ENCODE measurements at regions of chr17 and their contacts with region 1.

Region 1: DNA sequence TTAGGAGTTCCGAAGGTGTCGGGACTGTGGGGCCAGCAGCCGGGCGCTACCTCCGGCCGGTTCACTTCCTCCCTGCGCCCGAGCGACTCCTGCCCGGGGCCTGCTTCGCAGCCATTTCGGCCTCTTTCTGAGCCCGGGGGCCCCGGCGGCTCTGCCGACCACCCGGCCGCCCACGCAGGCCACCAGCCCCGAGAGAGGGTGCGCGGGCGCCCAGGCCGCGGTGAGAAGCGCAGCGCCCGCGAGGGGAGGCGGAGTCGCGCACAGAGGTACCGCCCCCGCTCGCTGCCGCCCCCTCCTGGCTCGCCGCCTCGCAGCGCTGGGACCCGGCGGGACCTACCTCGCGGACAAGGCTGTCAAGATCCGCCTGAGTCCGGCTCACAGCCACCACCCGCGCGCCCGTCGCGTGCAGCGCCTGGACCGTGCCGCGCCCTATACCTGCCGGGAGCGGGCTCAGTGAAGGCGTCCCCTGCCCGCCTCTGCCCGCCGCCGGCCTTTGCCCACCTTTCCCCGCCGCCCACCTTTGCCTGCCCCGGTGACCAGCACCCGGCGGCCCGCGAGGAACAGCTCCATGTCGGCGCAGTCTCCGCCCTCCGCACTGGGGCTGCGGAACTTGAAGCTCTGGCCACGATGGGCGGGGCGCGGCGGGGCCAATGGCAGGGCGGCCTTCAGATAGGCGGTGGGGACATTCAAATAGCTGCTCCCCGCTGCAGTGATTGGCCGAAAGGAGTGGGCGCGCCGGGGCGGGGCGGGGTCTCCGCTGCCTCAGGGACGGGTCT is at the start of gene DCXR:
- DNase-seq: peak; percentile 98
- ATAC-seq: peak; percentile 96
- H3K4me3 Mint-ChIP-seq: peak within 1 kb of the TSS; percentile 78
- H3K27ac Mint-ChIP-seq: peak within 1 kb of the TSS; percentile 94
- H3K4me1 Mint-ChIP-seq: peaks cover 28% of the 10 kb centered on the region
- H3K27me3 Mint-ChIP-seq: no peaks in the 10 kb centered on the region
- total RNA-seq, gene DCXR: 141 TPM

Region 2: GRCh38 chr17:81941790-81942553 is 95.3 kb before region 1 on chr17:
- CTCF ChIA-PET with region 1: no interaction called
- POLR2A ChIA-PET with region 1: no interaction called
- DNase-seq: no peak
- ATAC-seq: no peak
- H3K4me3 Mint-ChIP-seq: no peak overlapping the region
- H3K27ac Mint-ChIP-seq: no peak overlapping the region
- H3K4me1 Mint-ChIP-seq: peaks cover 12% of the 10 kb centered on the region
- H3K27me3 Mint-ChIP-seq: no peaks in the 10 kb centered on the region

Region 3: DNA sequence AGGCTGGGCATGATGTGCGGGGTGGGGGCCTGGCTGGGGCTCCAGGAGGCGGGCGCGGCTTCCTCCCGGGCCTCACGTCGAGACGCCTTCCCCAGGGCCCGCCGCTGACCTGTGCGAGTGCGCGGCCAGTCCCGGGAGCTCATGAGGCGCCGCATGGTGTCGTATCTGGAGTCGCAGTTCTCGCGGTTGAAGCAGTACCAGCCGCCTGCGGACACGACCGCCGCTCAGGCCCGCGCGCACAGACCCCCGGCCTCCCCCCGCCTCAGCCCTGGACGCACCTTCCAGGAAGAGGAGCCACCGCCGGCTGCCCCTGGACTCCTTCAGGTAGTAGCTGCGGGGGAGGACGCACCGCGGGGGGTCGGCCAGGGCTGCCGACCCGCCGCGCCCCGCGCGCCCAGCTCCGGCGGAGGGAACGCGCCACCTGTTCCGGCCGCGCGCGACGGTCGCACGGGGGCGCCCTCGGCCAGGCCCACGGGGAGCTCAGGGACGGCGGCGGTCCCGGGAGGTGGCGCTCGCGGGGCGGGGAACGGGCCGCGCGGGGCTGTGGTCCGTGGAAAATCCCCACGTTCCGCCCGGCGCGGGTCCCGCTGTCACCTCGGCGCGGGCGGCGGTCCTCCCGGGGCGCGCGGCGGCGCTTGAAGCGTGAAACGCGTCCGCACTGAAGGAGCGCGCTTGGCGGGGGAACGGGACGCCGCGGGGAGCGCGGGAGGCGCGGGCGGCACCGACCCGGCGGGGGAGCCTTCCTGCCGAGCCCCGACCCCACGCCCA is 77.8 kb before region 1 on chr17:
- CTCF ChIA-PET with region 1: interaction called, 14 read pairs
- POLR2A ChIA-PET with region 1: no interaction called
- DNase-seq: peak; percentile 80
- ATAC-seq: peak; percentile 97
- H3K4me3 Mint-ChIP-seq: no peak overlapping the region
- H3K27ac Mint-ChIP-seq: no peak overlapping the region
- H3K4me1 Mint-ChIP-seq: peaks cover 7% of the 10 kb centered on the region
- H3K27me3 Mint-ChIP-seq: peaks cover 40% of the 10 kb centered on the region

Region 4: DNA sequence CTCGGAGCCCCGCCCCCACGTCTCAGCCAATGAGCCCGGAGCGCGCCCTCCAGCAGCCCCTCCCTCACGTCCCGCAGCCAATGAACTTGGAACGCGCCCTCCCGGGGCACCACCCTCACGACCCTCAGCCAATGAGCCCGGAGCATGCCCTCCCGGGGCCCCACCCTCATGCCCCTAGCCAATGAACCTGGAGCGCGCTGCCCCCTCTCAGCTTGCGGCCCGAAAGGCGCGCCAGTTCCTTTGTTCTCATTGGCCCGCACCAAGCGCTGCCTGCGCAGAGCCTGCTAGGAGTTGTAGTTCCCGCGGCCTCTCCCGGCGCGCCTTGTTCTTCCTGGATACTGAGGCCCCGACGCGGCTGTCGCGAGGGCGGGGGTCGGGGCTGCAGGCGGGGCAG is 14.3 kb before region 1 on chr17 and contains the start of gene LRRC45:
- CTCF ChIA-PET with region 1: interaction called, 32 read pairs
- POLR2A ChIA-PET with region 1: interaction called, 7 read pairs
- DNase-seq: peak; percentile 100
- ATAC-seq: peak; percentile 96
- H3K4me3 Mint-ChIP-seq: peak within 1 kb of the TSS; percentile 89
- H3K27ac Mint-ChIP-seq: peak within 1 kb of the TSS; percentile 83
- H3K4me1 Mint-ChIP-seq: peaks cover 43% of the 10 kb centered on the region
- H3K27me3 Mint-ChIP-seq: no peaks in the 10 kb centered on the region
- total RNA-seq, gene LRRC45: 58.3 to 58.9 TPM

Region 5: DNA sequence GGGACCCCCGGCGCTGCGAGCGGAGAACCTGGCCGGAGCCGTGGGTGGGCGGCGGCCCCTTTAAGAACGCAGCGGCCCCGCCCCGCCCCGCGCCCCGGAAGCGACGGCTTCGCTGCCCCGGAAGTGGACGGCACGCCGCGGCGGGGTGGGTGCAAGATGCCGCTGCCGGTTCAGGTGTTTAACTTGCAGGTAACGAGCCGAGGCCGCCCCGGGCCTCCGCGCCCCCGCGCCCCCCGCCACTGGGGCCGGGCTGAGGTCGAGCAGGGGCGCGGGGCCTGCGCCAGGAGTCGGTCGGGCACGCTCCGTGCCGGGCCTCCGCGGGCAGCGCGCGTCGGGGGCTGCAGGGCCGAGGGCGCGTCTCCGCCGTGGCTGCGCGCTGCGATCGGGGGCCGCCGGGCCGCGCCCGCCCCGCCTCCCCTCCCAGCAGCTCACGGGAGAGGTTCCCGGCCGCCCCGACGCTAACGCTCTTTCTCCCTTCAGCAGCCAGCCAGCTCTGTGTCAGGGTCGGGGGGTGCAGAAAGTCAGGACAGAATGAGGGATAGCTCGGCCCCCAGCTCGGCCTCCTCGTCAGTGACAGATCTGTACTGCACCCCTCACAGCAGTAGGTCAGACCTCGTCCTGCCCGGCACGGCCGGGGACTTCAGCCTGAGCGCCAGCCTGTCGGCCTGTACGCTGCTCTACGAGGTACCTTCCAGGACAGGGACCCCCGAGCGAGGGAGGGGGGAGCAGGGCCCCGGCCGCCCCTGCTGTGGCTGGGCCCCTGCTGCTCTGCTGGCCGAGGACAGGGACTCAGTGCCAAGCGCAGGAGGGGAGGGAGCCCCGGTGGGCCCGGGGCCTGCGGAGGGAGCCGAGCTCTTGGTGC is 14.7 kb after region 1 on chr17 and contains the starts of genes GPS1 and RFNG:
- CTCF ChIA-PET with region 1: interaction called, 17 read pairs
- POLR2A ChIA-PET with region 1: interaction called, 12 read pairs
- DNase-seq: peak; percentile 88
- ATAC-seq: peak; percentile 92
- H3K4me3 Mint-ChIP-seq: peak within 1 kb of the TSS; percentile 85
- H3K27ac Mint-ChIP-seq: peak within 1 kb of the TSS; percentile 83
- H3K4me1 Mint-ChIP-seq: peaks cover 24% of the 10 kb centered on the region
- H3K27me3 Mint-ChIP-seq: no peaks in the 10 kb centered on the region
- total RNA-seq, gene GPS1: 97.6 to 104 TPM
- total RNA-seq, gene RFNG: 19.4 to 20.8 TPM

Region 6: DNA sequence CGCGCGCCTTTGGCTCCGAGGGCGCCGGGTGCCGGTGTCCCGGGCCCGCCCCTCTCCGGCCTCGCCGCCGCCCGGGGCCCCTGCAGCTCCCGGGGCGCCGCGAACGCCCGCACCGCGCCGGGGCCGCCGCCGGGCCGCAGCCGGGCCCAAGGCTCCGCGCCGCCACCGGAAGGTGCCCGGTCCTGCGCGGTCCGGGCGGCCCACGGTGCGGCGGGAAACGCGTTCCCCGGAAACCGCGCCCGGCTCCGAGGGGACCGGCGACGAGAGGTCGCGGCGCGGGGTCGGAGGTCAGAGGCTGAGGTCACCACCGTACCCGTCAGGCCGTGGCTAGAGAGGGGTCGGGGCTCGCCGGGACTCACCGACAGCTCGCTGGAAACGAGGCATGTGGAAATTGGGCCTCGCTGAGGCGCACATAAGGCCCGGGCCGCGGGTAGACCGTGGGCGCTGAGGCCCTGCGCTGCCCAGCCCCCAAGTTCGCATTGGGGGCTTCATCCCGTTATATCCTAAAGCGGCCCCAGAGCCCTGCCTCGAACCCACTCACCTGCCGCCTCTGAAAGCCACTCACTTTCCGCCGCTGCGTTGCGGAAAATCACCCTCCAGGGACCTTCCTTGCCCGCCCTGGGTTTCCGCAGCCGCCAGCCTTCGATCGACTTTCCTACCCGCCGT is 28.5 kb after region 1 on chr17 and contains the start of gene DUS1L:
- CTCF ChIA-PET with region 1: interaction called, 11 read pairs
- POLR2A ChIA-PET with region 1: interaction called, 6 read pairs
- DNase-seq: peak; percentile 70
- ATAC-seq: peak; percentile 86
- H3K4me3 Mint-ChIP-seq: peak within 1 kb of the TSS; percentile 84
- H3K27ac Mint-ChIP-seq: peak within 1 kb of the TSS; percentile 86
- H3K4me1 Mint-ChIP-seq: peaks cover 19% of the 10 kb centered on the region
- H3K27me3 Mint-ChIP-seq: no peaks in the 10 kb centered on the region
- total RNA-seq, gene DUS1L: 126 to 127 TPM

Region 7: DNA sequence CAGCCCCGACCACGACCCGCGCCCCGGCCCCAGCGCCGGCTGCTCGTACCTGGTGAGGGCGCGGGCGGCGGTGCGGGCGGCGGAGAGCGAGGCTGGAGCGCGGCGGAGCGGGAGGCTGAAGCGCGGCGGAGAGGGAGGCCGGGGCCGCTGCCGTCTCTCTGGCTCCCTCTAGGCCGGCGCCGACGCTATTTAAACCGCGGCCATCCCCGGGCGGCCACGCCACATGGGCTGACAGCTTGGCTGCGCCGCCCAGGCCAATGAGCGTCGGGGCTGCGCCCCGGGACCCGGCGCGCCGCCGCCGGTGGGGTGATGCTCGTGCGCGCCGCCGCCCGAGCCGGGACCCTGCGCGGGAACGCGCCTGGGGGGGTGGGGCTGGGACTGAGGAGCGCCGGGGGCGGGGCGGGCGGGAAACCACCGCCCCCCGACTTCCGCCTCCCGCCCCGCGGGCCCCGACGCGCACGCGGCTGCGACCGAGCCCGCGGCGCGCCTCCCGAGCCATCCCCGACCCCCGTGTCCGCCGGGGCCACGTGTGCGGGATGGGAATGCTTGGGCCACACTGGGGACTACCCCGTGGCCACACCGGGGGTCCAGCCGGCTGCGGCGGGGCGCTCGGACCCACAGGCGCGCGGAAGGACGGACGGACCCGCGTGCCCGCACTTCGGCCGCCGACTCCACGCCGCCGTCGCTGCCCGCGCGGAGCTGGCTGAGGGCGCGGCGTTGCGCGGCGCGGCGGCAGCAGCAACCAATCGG is 60.9 kb after region 1 on chr17 and contains the start of gene FASN:
- CTCF ChIA-PET with region 1: no interaction called
- POLR2A ChIA-PET with region 1: no interaction called
- DNase-seq: peak; percentile 93
- ATAC-seq: peak; percentile 81
- H3K4me3 Mint-ChIP-seq: peak within 1 kb of the TSS; percentile 83
- H3K27ac Mint-ChIP-seq: peak within 1 kb of the TSS; percentile 75
- H3K4me1 Mint-ChIP-seq: peaks cover 27% of the 10 kb centered on the region
- H3K27me3 Mint-ChIP-seq: no peaks in the 10 kb centered on the region
- total RNA-seq, gene FASN: 255 to 261 TPM

Region 8: GRCh38 chr17:82120148-82120547 is 82.8 kb after region 1 on chr17:
- CTCF ChIA-PET with region 1: interaction called, 11 read pairs
- POLR2A ChIA-PET with region 1: interaction called, 3 read pairs
- DNase-seq: no peak
- ATAC-seq: peak; percentile 57
- H3K4me3 Mint-ChIP-seq: no peak overlapping the region
- H3K27ac Mint-ChIP-seq: peak overlapping the region; percentile 55
- H3K4me1 Mint-ChIP-seq: peaks cover 47% of the 10 kb centered on the region
- H3K27me3 Mint-ChIP-seq: no peaks in the 10 kb centered on the region

Region 9: DNA sequence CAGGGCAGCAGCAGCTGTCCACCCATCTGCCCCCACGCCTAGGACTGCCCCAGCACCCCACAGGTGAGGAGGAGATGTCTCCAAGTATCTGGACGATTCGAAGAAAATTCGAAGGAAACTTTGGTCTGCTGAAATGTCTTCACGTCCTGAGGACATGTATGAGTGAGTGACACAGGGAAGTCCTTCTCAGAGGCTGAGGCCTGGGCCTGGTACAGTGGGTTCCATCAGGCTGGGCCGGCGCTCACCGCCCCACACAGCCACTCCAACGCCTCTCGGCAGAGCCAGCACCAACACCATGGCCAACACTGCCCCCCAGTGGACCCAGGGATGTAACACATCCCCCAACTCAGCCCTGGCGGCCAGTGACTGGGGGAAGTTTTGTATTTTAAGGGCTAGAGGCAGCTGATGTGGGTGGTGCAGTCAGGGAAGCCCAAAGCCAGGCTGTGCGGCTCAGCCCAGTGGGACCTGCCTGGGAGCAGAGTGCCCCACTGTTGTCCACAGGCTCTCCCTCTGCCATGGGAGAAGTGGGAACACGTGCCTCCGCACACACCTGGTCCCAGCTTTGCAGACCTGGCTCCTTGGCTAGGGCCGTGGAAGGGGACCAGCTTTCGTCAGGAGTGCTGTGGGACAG is 116.6 kb after region 1 on chr17:
- CTCF ChIA-PET with region 1: interaction called, 15 read pairs
- POLR2A ChIA-PET with region 1: no interaction called
- DNase-seq: peak; percentile 88
- ATAC-seq: peak; percentile 98
- H3K4me3 Mint-ChIP-seq: no peak overlapping the region
- H3K27ac Mint-ChIP-seq: peak overlapping the region; percentile 66
- H3K4me1 Mint-ChIP-seq: peaks cover 4% of the 10 kb centered on the region
- H3K27me3 Mint-ChIP-seq: no peaks in the 10 kb centered on the region